Posterior vena cava (tissue), 2 donors: ENCODE measurements at regions of chr6 and their contacts with region 1.

Region 1: DNA sequence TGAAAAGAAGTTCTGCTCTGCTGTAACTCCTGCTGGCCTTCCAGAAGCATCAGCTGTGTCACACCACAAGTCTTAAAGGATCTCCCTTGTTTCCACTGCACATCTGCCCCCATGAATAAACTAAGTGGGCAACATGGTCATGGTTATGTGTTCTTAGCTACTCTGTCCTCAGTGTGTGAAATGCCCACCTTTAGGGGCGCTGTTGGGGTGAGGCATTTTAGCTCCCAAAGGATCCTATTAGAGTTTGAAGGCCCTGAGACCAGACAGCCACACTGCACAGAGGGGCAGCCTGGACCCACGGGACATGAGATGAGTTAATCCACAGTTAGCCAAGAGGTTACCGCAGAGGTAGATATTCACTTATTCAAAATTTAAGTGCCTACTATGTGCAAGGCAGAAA is 294.3 kb upstream of the QKI start:
- DNase-seq: no peak

Region 2: GRCh38 chr6:162014069-162014811 is 1106.0 kb before region 1 on chr6:
- intact Hi-C with region 1: no loop called
- DNase-seq: no peak

Region 3: DNA sequence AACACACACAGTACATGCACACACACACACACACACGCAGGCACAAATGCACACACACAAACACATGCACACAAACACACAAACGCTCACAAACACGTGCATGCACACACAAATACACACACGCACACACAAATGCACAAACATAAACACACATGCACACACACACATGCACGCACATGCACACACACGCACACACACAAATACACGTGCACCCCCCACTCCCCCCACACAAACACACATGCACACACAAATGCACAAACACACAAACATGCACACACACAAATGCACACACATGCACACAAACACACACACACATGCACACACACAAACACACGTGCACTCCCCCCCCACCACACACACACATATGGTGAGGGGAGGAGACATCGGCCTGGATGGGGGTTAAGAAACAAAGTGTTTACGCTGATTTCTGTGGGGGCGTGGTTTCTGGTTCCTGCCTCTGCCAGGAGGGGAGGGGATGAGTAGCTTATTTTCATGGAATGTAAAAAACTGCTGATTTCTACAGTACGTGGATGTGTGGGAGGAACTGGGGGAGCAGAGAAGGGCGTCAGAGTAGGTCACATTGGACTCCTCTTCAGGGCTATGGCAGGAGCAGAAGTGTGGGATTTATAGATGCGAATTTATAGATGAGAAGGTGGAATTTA is 901.5 kb after region 1 on chr6:
- intact Hi-C with region 1: loop called in 1 of 2 experiments (anchors 2 kb)
- DNase-seq: no peak